ENCODE measurements at regions of chr16 and their contacts with region 1.

Region 1: DNA sequence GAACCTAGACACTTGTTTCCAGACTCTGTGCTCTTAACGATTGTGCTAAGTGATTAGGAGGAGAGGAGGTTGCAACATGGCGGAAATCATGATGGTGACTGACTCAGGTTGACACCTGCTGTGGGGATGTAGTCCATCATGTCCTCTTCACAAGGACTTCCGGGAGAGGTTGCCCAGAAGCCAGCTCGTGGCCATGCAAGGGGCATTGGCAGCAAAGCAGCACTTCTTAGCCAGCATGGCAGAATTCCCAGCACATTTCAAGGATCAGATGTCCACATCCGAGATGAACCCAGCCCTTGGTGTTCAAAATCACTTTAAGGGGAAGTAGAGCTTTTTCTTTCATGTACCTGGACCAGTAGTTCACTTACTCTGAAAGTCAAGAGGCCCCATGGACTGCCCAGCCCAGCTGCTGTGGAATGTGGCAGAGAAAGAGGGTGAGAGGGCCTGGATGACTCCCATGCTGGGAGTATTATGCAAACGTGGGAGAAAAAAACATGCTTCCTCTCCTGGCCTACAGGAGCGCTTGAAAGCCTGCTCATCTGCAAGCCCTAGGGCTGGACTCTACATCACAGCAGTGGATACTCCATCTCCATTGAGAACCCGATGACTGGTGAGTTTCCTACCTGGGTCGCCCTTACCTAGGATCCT is 65.5 kb downstream of the IRX6 start:
- DNase-seq: peak; percentile 83 to 89
- H3K4me3 ChIP-seq: no peak overlapping the region
- H3K27ac ChIP-seq: no peak overlapping the region
- H3K4me1 ChIP-seq: peaks cover 4 to 7% of the 10 kb centered on the region in 2 donors
- H3K27me3 ChIP-seq: no peaks in the 10 kb centered on the region
- CTCF ChIP-seq: peak in 1 of 6 experiments; percentile 9
- POLR2A ChIP-seq: no peak

Region 2: DNA sequence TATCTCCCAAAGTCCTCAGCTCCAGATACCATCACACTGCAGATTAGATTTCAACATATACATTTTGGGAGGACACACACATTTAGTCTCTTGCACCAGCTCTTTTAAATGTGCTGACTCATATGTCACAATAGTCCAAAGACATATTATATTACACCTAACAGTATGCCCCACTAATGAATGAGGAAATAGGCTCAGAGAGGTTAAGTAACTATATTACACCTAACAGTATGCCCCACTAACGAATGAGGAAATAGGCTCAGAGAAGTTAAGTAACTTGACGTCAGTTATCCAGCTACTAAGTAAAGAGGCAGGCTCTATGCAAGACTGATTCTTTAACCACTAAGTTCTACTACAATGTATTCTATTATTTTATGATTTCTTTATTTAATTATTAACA is 55.9 kb before region 1 on chr16:
- intact Hi-C with region 1: loop called (anchors 10 kb)
- DNase-seq: no peak
- H3K4me3 ChIP-seq: no peak overlapping the region
- H3K27ac ChIP-seq: no peak overlapping the region
- H3K4me1 ChIP-seq: peaks cover 0 to 14% of the 10 kb centered on the region in 2 donors
- H3K27me3 ChIP-seq: peaks cover 6% of the 10 kb centered on the region
- CTCF ChIP-seq: no peak
- POLR2A ChIP-seq: no peak

Region 3: DNA sequence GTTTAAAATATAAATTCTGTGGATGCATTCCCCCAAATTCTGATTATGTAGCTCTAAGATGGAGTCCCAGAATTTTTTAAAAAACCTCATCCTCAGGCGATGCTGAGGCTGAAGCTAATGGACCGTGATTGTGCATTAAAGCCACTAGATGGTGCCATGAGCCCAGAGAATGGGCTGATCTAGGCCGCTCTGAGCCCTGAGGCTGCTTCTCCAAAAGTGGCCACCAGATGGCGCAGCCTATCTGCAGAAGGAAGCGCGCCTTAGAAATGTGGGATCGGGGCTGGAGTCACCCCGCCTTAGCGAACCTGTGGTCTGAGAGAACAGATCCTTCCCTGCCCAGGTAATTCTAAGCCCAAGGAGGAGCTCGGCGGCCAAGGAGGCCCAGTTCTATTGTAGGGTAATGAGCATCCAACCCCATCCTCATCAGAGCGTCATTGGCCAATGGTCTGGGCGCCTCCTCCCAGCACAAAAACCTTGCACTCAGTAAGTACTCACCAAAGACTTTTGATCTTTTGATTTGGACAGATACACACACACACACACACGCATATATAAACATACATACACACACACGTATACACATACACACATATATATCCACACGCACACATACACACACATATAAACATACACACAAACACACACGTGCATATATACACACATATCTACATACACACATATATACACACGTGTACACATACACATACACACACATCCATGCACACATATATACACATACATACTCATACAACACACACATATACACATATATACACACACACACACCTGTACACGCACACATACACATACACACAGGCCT is 75.7 kb after region 1 on chr16:
- intact Hi-C with region 1: no loop called
- DNase-seq: peak; percentile 89
- H3K4me3 ChIP-seq: no peak overlapping the region
- H3K27ac ChIP-seq: no peak overlapping the region
- H3K4me1 ChIP-seq: peaks cover 0 to 2% of the 10 kb centered on the region in 2 donors
- H3K27me3 ChIP-seq: no peaks in the 10 kb centered on the region
- CTCF ChIP-seq: peak; percentile 95 to 100 (median 100)
- POLR2A ChIP-seq: no peak